ENCODE measurements at regions of chr1 and their contacts with region 1.

Region 1: DNA sequence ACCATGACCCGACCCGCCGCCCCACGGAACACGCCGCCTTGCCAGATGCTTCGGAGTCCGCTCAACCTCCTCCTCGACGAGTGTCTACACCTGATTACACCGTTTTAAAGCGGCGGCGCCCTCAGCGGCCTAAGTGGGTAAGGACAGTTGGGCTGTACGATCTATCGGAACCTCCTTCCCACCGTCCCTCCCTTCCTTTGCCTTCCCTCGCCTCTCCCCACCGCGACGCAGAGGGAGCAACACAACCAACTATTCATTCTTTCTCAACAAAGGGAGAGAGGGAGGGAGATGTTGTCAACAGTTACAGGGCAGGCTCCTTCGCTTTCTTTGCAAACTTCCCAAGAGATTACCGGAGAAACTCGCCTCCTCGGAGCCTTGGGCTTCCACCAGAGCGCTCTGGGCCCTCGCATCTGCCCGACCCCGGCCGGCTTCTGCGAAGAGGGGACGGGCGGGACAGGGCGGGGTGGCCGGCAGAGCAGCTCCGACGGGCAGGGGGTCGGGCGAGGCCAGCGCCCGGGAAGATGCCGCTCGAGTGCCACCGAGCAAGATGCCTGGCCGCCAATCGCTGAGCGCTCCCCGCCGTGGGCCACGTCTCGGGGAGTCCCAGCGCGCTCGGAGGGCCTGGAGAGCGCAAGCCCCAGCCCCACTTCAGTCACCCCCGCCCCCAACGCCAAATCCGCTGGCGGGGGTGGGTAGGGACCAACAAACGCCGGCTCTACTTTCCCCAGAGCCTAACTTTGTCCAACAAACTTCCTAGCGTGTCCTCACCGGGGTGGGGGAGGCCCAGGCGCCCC is 683 bp downstream of the BCAR3 start:
- DNase-seq: peak; percentile 86
- ATAC-seq: peak; percentile 78
- H3K4me3 ChIP-seq: peak overlapping the region; percentile 65 to 86 (median 76)
- H3K4me3 Mint-ChIP-seq: peak overlapping the region; percentile 100
- H3K27ac ChIP-seq: peak overlapping the region; percentile 12 to 25
- H3K27ac Mint-ChIP-seq: peak overlapping the region; percentile 98
- H3K4me1 ChIP-seq: peaks cover 23 to 34% of the 10 kb centered on the region in 2 donors
- H3K4me1 Mint-ChIP-seq: peaks cover 69% of the 10 kb centered on the region
- H3K27me3 ChIP-seq: no peaks in the 10 kb centered on the region
- H3K27me3 Mint-ChIP-seq: no peaks in the 10 kb centered on the region
- CTCF ChIP-seq: peak; percentile 46

Region 2: DNA sequence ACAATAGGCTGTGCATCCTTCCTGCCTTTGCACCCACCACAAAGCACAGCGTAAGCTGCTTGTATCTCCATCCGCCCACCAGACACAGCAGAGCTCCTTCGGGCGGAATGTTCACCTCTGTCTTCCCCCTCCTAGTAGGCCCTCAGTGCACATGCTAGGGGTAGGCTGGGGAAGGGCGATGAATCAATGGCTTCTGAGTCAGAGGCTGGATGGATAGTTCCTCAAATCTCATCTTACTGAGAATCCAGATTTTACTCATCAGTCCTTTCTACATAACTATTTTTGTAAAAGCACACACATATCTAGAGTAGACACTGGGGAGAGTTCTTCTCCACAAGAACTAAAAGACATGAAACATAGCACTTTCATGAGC is 73.2 kb before region 1 on chr1:
- CTCF ChIA-PET with region 1: no interaction called
- POLR2A ChIA-PET with region 1: no interaction called
- intact Hi-C with region 1: no loop called
- DNase-seq: no peak
- ATAC-seq: peak; percentile 75
- H3K4me3 ChIP-seq: no peak overlapping the region
- H3K4me3 Mint-ChIP-seq: peak overlapping the region; percentile 23
- H3K27ac ChIP-seq: no peak overlapping the region
- H3K27ac Mint-ChIP-seq: peak overlapping the region; percentile 66
- H3K4me1 ChIP-seq: peaks cover 0 to 28% of the 10 kb centered on the region in 2 donors
- H3K4me1 Mint-ChIP-seq: peaks cover 55% of the 10 kb centered on the region
- H3K27me3 ChIP-seq: no peaks in the 10 kb centered on the region
- H3K27me3 Mint-ChIP-seq: no peaks in the 10 kb centered on the region
- CTCF ChIP-seq: no peak

Region 3: DNA sequence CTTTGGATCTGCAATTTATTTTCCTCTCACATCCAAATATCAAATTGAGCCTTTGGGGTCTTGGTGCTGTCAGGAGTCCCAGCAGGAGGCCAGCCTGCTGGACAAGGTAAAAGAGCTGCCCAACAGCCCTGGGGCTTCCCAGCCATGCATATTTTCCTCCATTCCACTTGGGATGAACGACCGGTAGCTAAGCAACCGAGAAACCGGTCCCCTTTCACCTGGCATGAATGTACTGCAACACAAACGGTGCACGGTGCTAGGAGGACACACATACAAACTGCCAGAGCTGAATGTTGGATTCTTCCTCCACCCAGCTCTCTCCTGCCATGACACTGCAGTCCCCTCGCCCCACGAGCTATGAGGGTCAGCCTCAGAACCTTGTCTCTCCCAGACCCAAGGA is 42.0 kb before region 1 on chr1:
- CTCF ChIA-PET with region 1: interaction called, 8 read pairs
- POLR2A ChIA-PET with region 1: no interaction called
- intact Hi-C with region 1: loop called (anchors 2 kb)
- DNase-seq: no peak
- ATAC-seq: no peak
- H3K4me3 ChIP-seq: no peak overlapping the region
- H3K4me3 Mint-ChIP-seq: no peak overlapping the region
- H3K27ac ChIP-seq: no peak overlapping the region
- H3K27ac Mint-ChIP-seq: no peak overlapping the region
- H3K4me1 ChIP-seq: peaks cover 0 to 11% of the 10 kb centered on the region in 2 donors
- H3K4me1 Mint-ChIP-seq: peaks cover 19% of the 10 kb centered on the region
- H3K27me3 ChIP-seq: no peaks in the 10 kb centered on the region
- H3K27me3 Mint-ChIP-seq: no peaks in the 10 kb centered on the region
- CTCF ChIP-seq: no peak

Region 4: GRCh38 chr1:93701619-93702018 is 20.7 kb after region 1 on chr1:
- CTCF ChIA-PET with region 1: interaction called, 14 read pairs
- POLR2A ChIA-PET with region 1: interaction called, 4 read pairs
- intact Hi-C with region 1: no loop called
- DNase-seq: no peak
- ATAC-seq: no peak
- H3K4me3 ChIP-seq: no peak overlapping the region
- H3K4me3 Mint-ChIP-seq: peak overlapping the region; percentile 26
- H3K27ac ChIP-seq: no peak overlapping the region
- H3K27ac Mint-ChIP-seq: peak overlapping the region; percentile 88
- H3K4me1 ChIP-seq: peaks cover 54 to 61% of the 10 kb centered on the region in 2 donors
- H3K4me1 Mint-ChIP-seq: peaks cover 62% of the 10 kb centered on the region
- H3K27me3 ChIP-seq: no peaks in the 10 kb centered on the region
- H3K27me3 Mint-ChIP-seq: no peaks in the 10 kb centered on the region
- CTCF ChIP-seq: no peak

Region 5: DNA sequence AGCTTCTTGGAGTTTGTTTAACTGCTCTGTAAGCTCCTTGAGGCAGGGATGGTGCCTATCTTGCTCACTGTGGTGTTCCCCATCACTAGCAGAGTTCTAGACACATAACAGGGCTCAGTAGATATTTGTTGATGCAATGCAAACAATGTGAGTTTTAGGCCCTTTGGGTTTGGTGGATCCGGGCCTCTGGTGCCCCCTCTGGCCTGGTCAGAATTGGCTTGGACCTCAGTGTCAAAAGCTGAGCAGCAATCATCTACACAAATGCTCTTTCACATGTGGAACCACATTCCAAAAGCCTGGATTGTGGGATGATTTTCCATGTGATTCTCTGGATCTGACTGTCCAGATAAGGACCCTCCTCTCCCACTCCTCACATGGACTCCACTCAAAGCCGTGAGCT is 54.0 kb after region 1 on chr1:
- CTCF ChIA-PET with region 1: interaction called, 13 read pairs
- POLR2A ChIA-PET with region 1: no interaction called
- intact Hi-C with region 1: no loop called
- DNase-seq: peak; percentile 24
- ATAC-seq: no peak
- H3K4me3 ChIP-seq: no peak overlapping the region
- H3K4me3 Mint-ChIP-seq: no peak overlapping the region
- H3K27ac ChIP-seq: no peak overlapping the region
- H3K27ac Mint-ChIP-seq: no peak overlapping the region
- H3K4me1 ChIP-seq: peaks cover 0 to 8% of the 10 kb centered on the region in 2 donors
- H3K4me1 Mint-ChIP-seq: peaks cover 18% of the 10 kb centered on the region
- H3K27me3 ChIP-seq: no peaks in the 10 kb centered on the region
- H3K27me3 Mint-ChIP-seq: no peaks in the 10 kb centered on the region
- CTCF ChIP-seq: peak; percentile 33